Right lobe of liver (tissue), 6 donors: ENCODE measurements at regions of chr1 and their contacts with region 1.

Region 1: DNA sequence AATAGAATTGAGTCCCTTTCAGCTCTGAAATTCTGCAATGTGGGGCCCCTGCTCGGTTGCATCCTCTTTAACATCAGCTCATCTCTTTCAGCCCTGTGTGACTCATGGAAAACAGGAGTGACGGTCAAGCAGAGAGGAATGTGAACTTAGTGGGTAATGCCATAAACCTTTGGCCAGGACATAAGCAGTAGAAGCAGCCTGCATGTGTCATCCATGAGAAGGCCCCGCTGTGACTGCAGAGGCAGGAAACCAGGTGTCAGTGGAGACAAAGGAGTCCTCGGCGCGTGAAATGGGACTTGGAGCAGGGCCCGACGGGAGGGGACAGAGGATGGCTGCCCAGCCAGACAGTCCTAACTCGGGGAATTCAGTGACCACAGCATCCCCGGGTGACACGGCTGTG is 21.1 kb upstream of the EPHB2 start:
- DNase-seq: no peak
- ATAC-seq: no peak
- H3K4me3 ChIP-seq: no peak overlapping the region
- H3K27ac ChIP-seq: no peak overlapping the region
- H3K4me1 ChIP-seq: no peaks in the 10 kb centered on the region
- H3K27me3 ChIP-seq: no peaks in the 10 kb centered on the region
- CTCF ChIP-seq: no peak
- POLR2A ChIP-seq: no peak

Region 2: GRCh38 chr1:22431965-22432364 is 257.5 kb before region 1 on chr1:
- intact Hi-C with region 1: no loop called
- DNase-seq: no peak
- ATAC-seq: no peak
- H3K4me3 ChIP-seq: no peak overlapping the region
- H3K27ac ChIP-seq: no peak overlapping the region
- H3K4me1 ChIP-seq: no peaks in the 10 kb centered on the region
- H3K27me3 ChIP-seq: no peaks in the 10 kb centered on the region
- CTCF ChIP-seq: no peak
- POLR2A ChIP-seq: no peak

Region 3: DNA sequence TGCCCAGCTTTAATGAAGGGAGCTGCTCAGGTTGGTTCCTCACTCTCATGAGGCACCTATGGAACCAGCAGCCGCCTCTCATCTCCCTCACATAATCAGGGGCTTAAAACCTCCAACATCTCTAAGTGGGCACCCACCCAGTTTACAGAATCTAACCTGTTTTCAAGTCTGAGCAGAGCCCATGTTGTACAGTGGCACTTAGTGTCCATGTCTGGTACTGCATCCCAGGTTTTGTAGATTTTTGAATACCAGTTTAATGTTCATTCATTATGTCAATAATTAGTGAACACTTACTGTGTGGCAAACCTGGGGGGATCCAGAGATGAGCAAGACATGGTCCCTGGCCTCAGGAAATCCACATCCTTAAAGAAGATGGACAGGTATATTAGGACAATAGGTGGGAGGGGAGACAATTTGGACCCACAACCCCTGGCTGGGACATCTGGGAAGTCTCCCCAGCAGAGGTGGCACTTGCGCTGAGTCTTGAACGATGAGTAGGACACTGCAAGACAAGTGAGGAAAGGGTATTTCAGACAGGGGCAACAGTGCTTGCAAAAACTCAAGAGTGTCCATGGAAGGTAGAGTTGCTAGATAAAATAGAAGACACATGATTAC is 199.8 kb after region 1 on chr1:
- intact Hi-C with region 1: loop called in 1 of 2 experiments (anchors 10 kb)
- DNase-seq: no peak
- ATAC-seq: peak; percentile 63 to 71 (median 68)
- H3K4me3 ChIP-seq: no peak overlapping the region
- H3K27ac ChIP-seq: no peak overlapping the region
- H3K4me1 ChIP-seq: no peaks in the 10 kb centered on the region
- H3K27me3 ChIP-seq: no peaks in the 10 kb centered on the region
- CTCF ChIP-seq: peak; percentile 76 to 81 (median 80)
- POLR2A ChIP-seq: no peak

Region 4: DNA sequence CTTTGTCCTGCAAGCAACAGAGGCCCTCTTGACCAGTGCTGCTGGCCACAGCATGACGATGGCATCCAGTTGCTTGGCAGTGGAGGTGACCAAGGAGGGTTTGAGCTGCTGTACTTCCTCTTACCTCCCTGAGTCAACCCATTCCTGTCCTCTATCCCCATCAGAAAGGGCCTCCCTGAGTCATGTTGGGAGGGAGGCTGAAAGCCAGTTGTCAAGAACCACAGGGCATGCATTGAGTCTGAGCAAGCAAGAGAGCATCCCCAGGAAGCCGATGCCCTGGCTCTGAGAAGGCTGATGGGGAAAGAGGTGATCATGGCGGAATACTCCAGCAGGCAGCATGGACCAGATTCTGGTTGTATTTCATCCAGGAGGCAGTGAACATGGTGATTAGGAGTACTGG is 213.6 kb after region 1 on chr1:
- intact Hi-C with region 1: no loop called
- DNase-seq: no peak
- ATAC-seq: no peak
- H3K4me3 ChIP-seq: no peak overlapping the region
- H3K27ac ChIP-seq: no peak overlapping the region
- H3K4me1 ChIP-seq: no peaks in the 10 kb centered on the region
- H3K27me3 ChIP-seq: no peaks in the 10 kb centered on the region
- CTCF ChIP-seq: no peak
- POLR2A ChIP-seq: no peak